Endothelial cell of umbilical vein (primary cell): ENCODE measurements at regions of chr13 and their contacts with region 1.

Region 1: DNA sequence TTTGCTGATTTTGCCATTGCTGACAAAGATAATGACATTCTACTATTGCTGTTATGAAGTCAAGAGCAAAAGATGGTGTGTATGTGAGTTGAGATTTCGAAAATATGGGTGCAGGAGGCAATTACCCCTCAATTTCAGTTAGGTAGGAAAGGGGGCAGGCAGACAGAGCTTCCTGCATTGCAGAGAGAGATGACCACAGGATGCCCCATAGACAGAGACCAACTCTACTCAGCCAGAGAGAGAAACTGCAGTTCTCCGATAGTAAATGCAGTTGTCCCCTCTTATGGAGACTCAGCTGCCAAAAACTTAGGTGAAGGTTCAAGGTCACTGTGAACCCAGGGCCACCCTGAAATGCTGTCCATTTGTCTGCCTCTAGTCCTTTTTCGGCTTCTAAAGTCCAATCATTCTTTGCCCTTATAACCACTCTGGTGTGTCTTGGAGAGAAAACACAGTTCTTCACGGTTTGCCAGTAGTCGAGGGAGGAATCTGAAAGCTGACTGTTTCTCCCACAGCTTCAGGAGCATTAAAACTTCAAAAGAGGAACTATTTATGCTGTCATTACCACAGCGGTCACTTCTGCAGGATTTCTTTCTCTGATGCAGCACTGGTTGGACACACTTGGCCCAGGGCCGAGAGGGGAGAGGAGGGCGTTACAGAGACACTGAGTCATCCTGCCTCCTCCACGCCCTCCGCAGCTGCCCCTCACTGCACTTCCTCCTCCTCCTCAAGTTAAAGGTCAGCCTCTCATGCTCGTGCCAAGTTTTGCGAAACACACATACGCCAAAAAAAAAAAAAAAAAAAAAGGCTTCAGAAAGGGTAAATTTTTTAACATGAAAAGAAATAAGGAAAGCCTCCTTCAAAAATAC is 264.3 kb downstream of the FOXO1 start:
- DNase-seq: peak; percentile 93
- H3K4me3 ChIP-seq: no peak overlapping the region
- H3K27ac ChIP-seq: peak overlapping the region; percentile 61
- H3K4me1 ChIP-seq: peaks cover 31% of the 10 kb centered on the region
- H3K27me3 ChIP-seq: no peaks in the 10 kb centered on the region
- CTCF ChIP-seq: no peak
- POLR2A ChIP-seq: no peak

Region 2: GRCh38 chr13:40069173-40070044 is 332.7 kb before region 1 on chr13:
- CTCF ChIA-PET with region 1: interaction called, 7 read pairs
- POLR2A ChIA-PET with region 1: no interaction called
- dilution Hi-C with region 1: no loop called
- intact Hi-C with region 1: loop called (anchors 1 kb)
- DNase-seq: peak; percentile 69
- H3K4me3 ChIP-seq: no peak overlapping the region
- H3K27ac ChIP-seq: no peak overlapping the region
- H3K4me1 ChIP-seq: peaks cover 5% of the 10 kb centered on the region
- H3K27me3 ChIP-seq: no peaks in the 10 kb centered on the region
- CTCF ChIP-seq: peak; percentile 69 to 82
- POLR2A ChIP-seq: no peak

Region 3: DNA sequence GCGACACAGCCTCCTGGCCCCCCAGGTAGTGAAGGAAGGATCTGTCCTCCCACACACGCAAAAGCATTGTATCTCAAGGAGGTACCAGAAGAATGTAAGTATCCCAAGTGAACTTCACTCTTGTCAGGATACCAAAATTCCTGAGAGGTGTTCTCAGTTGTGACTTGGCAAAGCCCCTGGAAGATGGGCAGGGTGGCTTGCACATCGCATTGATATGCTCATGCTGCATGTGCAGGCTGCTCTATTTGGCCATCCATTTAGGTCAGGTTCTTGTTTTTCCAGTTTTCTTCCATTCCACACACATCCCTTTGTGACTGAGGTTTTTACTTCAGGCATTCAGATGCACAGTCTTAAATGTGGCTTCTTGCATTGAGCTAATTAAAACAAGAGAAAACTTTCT is 118.5 kb before region 1 on chr13:
- CTCF ChIA-PET with region 1: no interaction called
- POLR2A ChIA-PET with region 1: no interaction called
- dilution Hi-C with region 1: no loop called
- intact Hi-C with region 1: no loop called
- DNase-seq: no peak
- H3K4me3 ChIP-seq: no peak overlapping the region
- H3K27ac ChIP-seq: no peak overlapping the region
- H3K4me1 ChIP-seq: no peaks in the 10 kb centered on the region
- H3K27me3 ChIP-seq: no peaks in the 10 kb centered on the region
- CTCF ChIP-seq: no peak
- POLR2A ChIP-seq: no peak

Region 4: DNA sequence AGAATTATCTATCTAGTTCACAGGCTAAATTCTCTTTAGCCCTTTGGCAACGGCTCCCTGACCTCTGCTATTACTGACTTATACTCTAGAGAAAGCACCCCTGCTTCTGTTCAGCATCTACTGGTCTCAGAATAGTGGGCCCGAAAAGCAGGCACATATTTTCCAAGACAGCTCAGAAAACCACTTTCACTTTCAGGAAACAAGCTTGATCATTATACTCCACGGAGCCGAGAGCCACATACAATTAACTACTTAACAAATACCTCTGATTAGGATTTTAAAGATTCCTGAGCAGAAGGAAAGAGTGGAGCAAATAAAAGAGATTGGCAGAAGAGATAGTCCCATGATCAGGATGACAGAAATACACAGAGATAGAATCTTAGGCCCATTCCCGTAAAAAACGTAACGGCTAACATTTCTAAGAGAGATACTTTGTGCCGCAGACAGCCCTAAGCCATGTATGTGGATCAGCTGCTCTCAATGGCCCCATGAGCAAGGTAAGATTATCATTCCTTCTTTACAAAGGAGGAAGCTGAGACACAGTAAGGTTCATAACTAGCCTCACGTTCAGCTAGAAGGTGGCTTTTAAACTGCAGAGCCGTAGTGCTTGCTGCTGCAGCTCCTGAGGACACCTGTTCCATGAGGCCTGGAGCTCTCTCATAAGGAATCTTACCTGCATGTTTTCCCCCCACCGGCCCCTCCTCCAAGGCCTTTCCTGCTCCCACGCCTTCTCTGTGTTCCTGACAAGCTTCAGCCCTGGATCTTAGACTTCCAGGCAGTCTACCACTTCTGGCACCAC is 37.1 kb after region 1 on chr13:
- CTCF ChIA-PET with region 1: interaction called, 4 read pairs
- POLR2A ChIA-PET with region 1: no interaction called
- dilution Hi-C with region 1: no loop called
- intact Hi-C with region 1: loop called (anchors 1 kb)
- DNase-seq: peak; percentile 83
- H3K4me3 ChIP-seq: peak overlapping the region in 2 of 3 experiments; percentile 16 to 49
- H3K27ac ChIP-seq: peak overlapping the region; percentile 86
- H3K4me1 ChIP-seq: peaks cover 44% of the 10 kb centered on the region
- H3K27me3 ChIP-seq: no peaks in the 10 kb centered on the region
- CTCF ChIP-seq: no peak
- POLR2A ChIP-seq: no peak

Region 5: DNA sequence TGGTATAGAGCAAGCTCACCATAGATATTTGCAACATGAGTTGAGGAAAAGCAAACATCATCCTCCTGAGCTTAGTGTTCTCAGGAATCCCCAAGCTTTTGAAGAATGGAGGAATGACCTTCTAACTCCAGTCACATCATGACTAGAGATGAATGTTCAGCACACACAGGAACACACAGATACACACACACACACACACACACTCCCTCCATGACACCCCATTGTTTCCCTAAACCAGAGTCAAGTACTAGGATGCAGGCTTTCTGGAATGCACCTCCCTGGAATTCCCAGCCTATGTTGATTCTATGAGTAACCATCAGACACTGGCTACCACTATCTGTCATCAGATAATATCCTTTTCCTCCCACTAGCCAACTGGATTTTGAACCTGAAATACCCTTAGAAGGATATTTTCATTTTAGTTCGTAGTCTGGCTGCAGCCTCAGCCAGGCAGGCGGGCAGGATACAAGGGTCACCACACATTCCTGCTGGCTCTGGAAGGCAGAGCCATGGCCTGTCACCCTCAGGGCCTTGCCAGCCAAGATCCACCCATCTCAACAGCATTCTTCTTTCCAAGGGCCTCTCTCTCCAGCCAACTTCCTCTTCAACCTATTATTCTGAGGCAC is 101.9 kb after region 1 on chr13:
- CTCF ChIA-PET with region 1: no interaction called
- POLR2A ChIA-PET with region 1: no interaction called
- dilution Hi-C with region 1: no loop called
- intact Hi-C with region 1: loop called (anchors 1 kb)
- DNase-seq: peak; percentile 99
- H3K4me3 ChIP-seq: no peak overlapping the region
- H3K27ac ChIP-seq: peak overlapping the region; percentile 99
- H3K4me1 ChIP-seq: peaks cover 51% of the 10 kb centered on the region
- H3K27me3 ChIP-seq: no peaks in the 10 kb centered on the region
- CTCF ChIP-seq: no peak
- POLR2A ChIP-seq: peak; percentile 74